ENCODE measurements at regions of chr9 and their contacts with region 1.

Region 1: GRCh38 chr9:34025062-34025461 is 23.6 kb downstream of the UBAP2 start:
- DNase-seq: no peak
- ATAC-seq: no peak
- H3K4me3 ChIP-seq: no peak overlapping the region
- H3K27ac ChIP-seq: no peak overlapping the region
- H3K4me1 ChIP-seq: no peaks in the 10 kb centered on the region
- H3K27me3 ChIP-seq: no peaks in the 10 kb centered on the region

Region 2: GRCh38 chr9:34084562-34084961 is 59.5 kb after region 1 on chr9:
- intact Hi-C with region 1: loop called in 1 of 2 experiments (anchors 10 kb)
- DNase-seq: no peak
- ATAC-seq: peak; percentile 76
- H3K4me3 ChIP-seq: no peak overlapping the region
- H3K27ac ChIP-seq: peak overlapping the region; percentile 79 to 99
- H3K4me1 ChIP-seq: peaks cover 3 to 8% of the 10 kb centered on the region in 2 donors
- H3K27me3 ChIP-seq: no peaks in the 10 kb centered on the region

Measured in aorta (tissue), 5 donors.